ENCODE measurements at regions of chr2 and their contacts with region 1.

Region 1: GRCh38 chr2:37330681-37331080 is 6.0 kb upstream of the PRKD3 start:
- DNase-seq: no peak
- H3K4me3 ChIP-seq: no peak overlapping the region
- CTCF ChIP-seq: no peak

Region 2: DNA sequence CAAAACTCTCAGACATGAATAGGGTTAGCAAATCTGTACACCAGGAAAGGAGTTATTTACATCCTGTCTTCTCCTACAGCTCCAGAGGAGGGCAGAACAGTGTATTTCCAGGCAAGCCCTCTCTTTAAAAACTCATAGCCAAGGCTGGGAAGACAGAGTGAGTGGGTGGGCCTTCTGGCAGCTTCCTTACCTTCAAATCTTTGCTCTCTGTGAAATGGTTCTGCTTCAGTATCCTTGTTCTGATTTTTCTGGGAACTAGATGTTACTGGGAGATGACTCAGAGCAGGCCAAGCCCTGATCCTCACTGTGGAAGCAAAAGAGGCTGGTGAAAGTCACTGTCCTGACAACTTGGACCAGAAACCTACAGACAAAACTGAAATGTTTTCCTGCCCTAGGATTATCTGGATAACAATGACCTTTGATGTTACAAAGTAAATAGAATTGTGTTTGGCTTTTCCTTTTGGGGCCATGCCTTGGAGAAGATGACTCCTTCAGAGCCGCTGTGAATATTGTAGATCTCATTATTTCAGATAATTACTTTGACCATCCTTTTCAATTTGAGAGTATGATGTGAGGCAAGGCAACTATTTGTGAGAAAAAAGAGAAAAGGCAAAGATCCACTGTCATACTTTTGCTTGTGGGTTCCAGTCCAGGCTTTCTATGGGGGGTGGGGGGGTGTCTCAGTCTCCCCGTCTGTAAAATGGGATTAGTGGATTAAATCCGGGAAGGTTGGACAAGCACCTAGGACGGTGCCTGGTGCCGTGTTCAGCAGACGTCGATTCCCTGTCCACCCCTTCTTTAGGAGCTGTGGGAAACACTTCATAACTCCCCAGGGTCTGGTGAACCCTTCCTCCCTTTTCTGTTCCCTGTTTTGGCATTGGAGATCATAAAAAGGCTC is 13.1 kb after region 1 on chr2:
- CTCF ChIA-PET with region 1: interaction called, 11 read pairs
- POLR2A ChIA-PET with region 1: interaction called, 3 read pairs
- DNase-seq: no peak
- H3K4me3 ChIP-seq: peak overlapping the region; percentile 66
- CTCF ChIP-seq: peak; percentile 38